Endothelial cell of umbilical vein (primary cell): ENCODE measurements at regions of chr1 and their contacts with region 1.

Region 1: GRCh38 chr1:22704440-22705067 is 6.1 kb upstream of the EPHB2 start:
- DNase-seq: peak; percentile 76
- H3K4me3 ChIP-seq: no peak overlapping the region
- H3K27ac ChIP-seq: no peak overlapping the region
- H3K4me1 ChIP-seq: peaks cover 14% of the 10 kb centered on the region
- H3K27me3 ChIP-seq: no peaks in the 10 kb centered on the region
- CTCF ChIP-seq: peak; percentile 88 to 90
- POLR2A ChIP-seq: no peak

Region 2: GRCh38 chr1:22131875-22132486 is 572.6 kb before region 1 on chr1:
- CTCF ChIA-PET with region 1: no interaction called
- POLR2A ChIA-PET with region 1: no interaction called
- dilution Hi-C with region 1: no loop called
- intact Hi-C with region 1: no loop called
- DNase-seq: peak; percentile 37
- H3K4me3 ChIP-seq: no peak overlapping the region
- H3K27ac ChIP-seq: no peak overlapping the region
- H3K4me1 ChIP-seq: peaks cover 13% of the 10 kb centered on the region
- H3K27me3 ChIP-seq: no peaks in the 10 kb centered on the region
- CTCF ChIP-seq: peak; percentile 87 to 94
- POLR2A ChIP-seq: no peak

Region 3: GRCh38 chr1:22341791-22342605 is 362.6 kb before region 1 on chr1:
- CTCF ChIA-PET with region 1: no interaction called
- POLR2A ChIA-PET with region 1: no interaction called
- dilution Hi-C with region 1: no loop called
- intact Hi-C with region 1: no loop called
- DNase-seq: peak; percentile 43
- H3K4me3 ChIP-seq: no peak overlapping the region
- H3K27ac ChIP-seq: no peak overlapping the region
- H3K4me1 ChIP-seq: no peaks in the 10 kb centered on the region
- H3K27me3 ChIP-seq: peaks cover 6 to 17% of the 10 kb centered on the region in 2 experiments
- CTCF ChIP-seq: no peak
- POLR2A ChIP-seq: no peak

Region 4: GRCh38 chr1:22691031-22691753 is 13.4 kb before region 1 on chr1:
- CTCF ChIA-PET with region 1: interaction called, 17 read pairs
- POLR2A ChIA-PET with region 1: no interaction called
- dilution Hi-C with region 1: no loop called
- intact Hi-C with region 1: no loop called
- DNase-seq: no peak
- H3K4me3 ChIP-seq: no peak overlapping the region
- H3K27ac ChIP-seq: no peak overlapping the region
- H3K4me1 ChIP-seq: peaks cover 6% of the 10 kb centered on the region
- H3K27me3 ChIP-seq: peaks cover 0 to 4% of the 10 kb centered on the region in 2 experiments
- CTCF ChIP-seq: no peak
- POLR2A ChIP-seq: no peak

Region 5: GRCh38 chr1:22749919-22750688 is 45.5 kb after region 1 on chr1:
- CTCF ChIA-PET with region 1: interaction called, 21 read pairs
- POLR2A ChIA-PET with region 1: no interaction called
- dilution Hi-C with region 1: no loop called
- intact Hi-C with region 1: no loop called
- DNase-seq: peak; percentile 95
- H3K4me3 ChIP-seq: no peak overlapping the region
- H3K27ac ChIP-seq: peak overlapping the region; percentile 90
- H3K4me1 ChIP-seq: peaks cover 78% of the 10 kb centered on the region
- H3K27me3 ChIP-seq: no peaks in the 10 kb centered on the region
- CTCF ChIP-seq: no peak
- POLR2A ChIP-seq: peak; percentile 68

Region 6: DNA sequence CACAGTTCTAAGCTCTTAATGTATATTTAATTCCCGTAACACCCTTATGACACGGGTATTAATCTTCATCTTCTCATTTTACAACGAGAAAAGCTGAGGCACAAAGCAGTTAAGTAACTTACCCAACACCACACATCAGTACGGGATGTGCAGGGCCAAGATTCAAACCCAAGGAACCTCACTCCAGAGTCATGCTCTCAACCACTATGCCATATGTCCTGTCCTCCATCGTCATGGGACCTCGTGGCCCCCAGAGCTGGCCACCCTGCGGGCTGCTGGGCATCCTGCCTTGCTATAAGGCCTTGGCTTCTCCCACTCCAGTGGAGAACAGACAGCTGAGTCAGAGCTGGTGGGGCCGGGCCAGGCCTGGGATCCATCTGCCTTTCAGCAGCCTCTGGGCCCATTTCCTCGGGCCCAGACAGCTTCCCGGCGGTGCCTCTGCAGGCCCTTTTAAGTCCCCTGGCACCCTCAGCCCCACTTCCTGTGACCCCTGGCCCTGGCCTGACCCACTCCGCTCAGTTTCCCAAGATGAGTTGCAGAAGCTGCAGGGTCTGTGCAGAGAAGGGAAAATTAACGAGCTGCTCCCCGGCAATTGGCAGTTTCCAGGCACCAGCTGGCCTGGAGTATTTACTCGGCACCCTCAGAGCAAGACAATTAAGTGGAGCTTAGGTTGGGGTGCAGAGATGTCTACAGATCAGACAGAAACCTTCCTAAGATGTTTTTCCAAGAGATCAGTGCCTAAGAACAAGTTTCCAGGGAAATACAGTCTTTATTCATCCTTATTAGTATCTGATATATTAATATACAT is 104.3 kb after region 1 on chr1:
- CTCF ChIA-PET with region 1: interaction called, 12 read pairs
- POLR2A ChIA-PET with region 1: no interaction called
- dilution Hi-C with region 1: no loop called
- intact Hi-C with region 1: no loop called
- DNase-seq: no peak
- H3K4me3 ChIP-seq: no peak overlapping the region
- H3K27ac ChIP-seq: no peak overlapping the region
- H3K4me1 ChIP-seq: no peaks in the 10 kb centered on the region
- H3K27me3 ChIP-seq: no peaks in the 10 kb centered on the region
- CTCF ChIP-seq: no peak
- POLR2A ChIP-seq: no peak

Region 7: GRCh38 chr1:22850681-22851080 is 146.1 kb after region 1 on chr1:
- CTCF ChIA-PET with region 1: interaction called, 37 read pairs
- POLR2A ChIA-PET with region 1: no interaction called
- dilution Hi-C with region 1: no loop called
- intact Hi-C with region 1: no loop called
- DNase-seq: peak; percentile 83
- H3K4me3 ChIP-seq: no peak overlapping the region
- H3K27ac ChIP-seq: no peak overlapping the region
- H3K4me1 ChIP-seq: peaks cover 9% of the 10 kb centered on the region
- H3K27me3 ChIP-seq: no peaks in the 10 kb centered on the region
- CTCF ChIP-seq: no peak
- POLR2A ChIP-seq: no peak

Region 8: GRCh38 chr1:22889213-22889827 is 184.8 kb after region 1 on chr1:
- CTCF ChIA-PET with region 1: interaction called, 57 read pairs
- POLR2A ChIA-PET with region 1: interaction called, 3 read pairs
- dilution Hi-C with region 1: no loop called
- intact Hi-C with region 1: loop called (anchors 1 kb)
- DNase-seq: peak; percentile 81
- H3K4me3 ChIP-seq: no peak overlapping the region
- H3K27ac ChIP-seq: peak overlapping the region; percentile 79
- H3K4me1 ChIP-seq: peaks cover 18% of the 10 kb centered on the region
- H3K27me3 ChIP-seq: no peaks in the 10 kb centered on the region
- CTCF ChIP-seq: peak; percentile 71 to 90
- POLR2A ChIP-seq: peak; percentile 5

Region 9: GRCh38 chr1:23691499-23692307 is 987.1 kb after region 1 on chr1 and contains the start of gene RPL11:
- CTCF ChIA-PET with region 1: no interaction called
- POLR2A ChIA-PET with region 1: no interaction called
- dilution Hi-C with region 1: no loop called
- intact Hi-C with region 1: no loop called
- DNase-seq: peak; percentile 96
- H3K4me3 ChIP-seq: peak within 1 kb of the TSS; percentile 70 to 96 (median 88)
- H3K27ac ChIP-seq: peak within 1 kb of the TSS; percentile 77
- H3K4me1 ChIP-seq: peaks cover 30% of the 10 kb centered on the region
- H3K27me3 ChIP-seq: no peaks in the 10 kb centered on the region
- CTCF ChIP-seq: peak; percentile 58 to 81
- POLR2A ChIP-seq: peak; percentile 98
- total RNA-seq, gene RPL11: 1,084 and 1,169 TPM in 2 replicates